Thyroid gland (tissue), 4 donors: ENCODE measurements at regions of chr5 and their contacts with region 1.

Region 1: DNA sequence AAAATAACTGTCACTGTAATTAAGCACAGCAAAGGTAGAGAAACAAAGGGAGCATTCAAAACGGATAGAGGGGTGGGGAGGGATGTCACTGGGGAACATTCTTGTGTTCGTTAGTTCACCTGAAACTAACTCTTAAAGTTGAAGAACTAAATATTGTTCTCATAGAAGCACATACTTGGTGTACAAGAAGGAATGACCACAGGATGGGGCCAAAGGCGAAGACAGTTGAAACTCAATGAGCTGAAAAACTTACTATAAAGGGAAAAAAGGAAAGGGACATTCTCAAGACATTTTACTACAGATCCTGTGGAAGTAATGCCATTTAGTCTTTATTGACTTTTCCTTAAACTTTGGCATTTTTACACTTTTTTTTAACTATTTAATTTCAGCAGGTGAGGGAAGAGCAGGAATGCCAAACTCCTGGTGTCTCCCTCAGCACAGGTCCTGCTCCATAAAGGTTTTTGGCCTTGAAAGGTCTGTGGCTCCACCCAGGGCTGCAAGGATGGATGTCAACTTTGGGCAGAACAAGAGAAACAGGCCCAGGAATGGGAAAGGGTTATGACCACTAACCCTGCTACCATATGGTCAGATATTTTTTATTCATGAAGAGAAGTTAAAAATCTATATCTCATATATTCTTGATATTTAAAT is 197.6 kb upstream of the RASA1 start:
- DNase-seq: peak; percentile 54 to 68
- H3K4me3 ChIP-seq: no peak overlapping the region
- H3K27ac ChIP-seq: no peak overlapping the region
- H3K4me1 ChIP-seq: no peaks in the 10 kb centered on the region
- H3K27me3 ChIP-seq: no peaks in the 10 kb centered on the region
- CTCF ChIP-seq: peak in 5 of 6 experiments; percentile 21 to 82 (median 61)
- POLR2A ChIP-seq: no peak

Region 2: GRCh38 chr5:86824637-86825036 is 245.5 kb before region 1 on chr5:
- intact Hi-C with region 1: no loop called
- DNase-seq: peak; percentile 56 to 57
- H3K4me3 ChIP-seq: no peak overlapping the region
- H3K27ac ChIP-seq: no peak overlapping the region
- H3K4me1 ChIP-seq: no peaks in the 10 kb centered on the region
- H3K27me3 ChIP-seq: no peaks in the 10 kb centered on the region
- CTCF ChIP-seq: no peak
- POLR2A ChIP-seq: no peak

Region 3: DNA sequence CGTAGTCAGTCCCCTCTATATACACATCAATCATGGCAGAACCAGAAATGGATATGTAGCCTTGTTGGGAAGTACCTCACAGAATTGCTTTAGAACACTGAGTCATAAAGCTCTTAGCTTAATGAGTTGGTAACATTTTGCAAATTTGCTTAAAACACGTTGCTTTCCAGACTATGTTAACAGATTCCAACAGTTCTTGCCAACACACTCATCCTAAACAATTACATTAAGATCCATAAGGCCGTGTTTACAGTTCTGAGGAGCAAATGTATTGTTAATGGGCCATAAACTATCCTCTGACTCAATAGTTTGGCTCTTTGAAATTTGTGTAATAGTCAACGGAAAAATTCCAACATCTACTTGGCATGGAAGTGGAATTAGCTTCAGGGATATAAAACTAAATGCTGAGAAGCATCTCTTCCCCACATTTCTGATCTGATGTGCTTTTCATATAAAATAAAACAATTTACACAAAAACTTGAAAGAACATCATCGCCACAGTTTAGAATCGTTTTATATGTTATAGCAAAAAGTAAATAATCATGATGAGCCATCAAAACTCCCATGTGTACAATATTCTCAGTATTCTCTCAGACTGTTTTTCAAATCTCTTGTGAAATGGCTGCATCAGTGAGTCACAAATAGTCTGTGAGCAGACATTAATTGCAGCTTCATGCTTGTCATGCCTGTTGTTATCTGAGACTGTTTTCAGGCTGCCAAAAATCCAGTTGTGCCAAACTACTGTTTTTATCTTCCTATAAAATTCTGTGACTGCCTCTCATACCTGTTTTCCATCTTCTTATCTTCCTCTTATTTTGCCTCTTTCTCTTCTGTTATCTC is 160.4 kb before region 1 on chr5:
- intact Hi-C with region 1: no loop called
- DNase-seq: no peak
- H3K4me3 ChIP-seq: no peak overlapping the region
- H3K27ac ChIP-seq: no peak overlapping the region
- H3K4me1 ChIP-seq: no peaks in the 10 kb centered on the region
- H3K27me3 ChIP-seq: no peaks in the 10 kb centered on the region
- CTCF ChIP-seq: no peak
- POLR2A ChIP-seq: no peak

Region 4: DNA sequence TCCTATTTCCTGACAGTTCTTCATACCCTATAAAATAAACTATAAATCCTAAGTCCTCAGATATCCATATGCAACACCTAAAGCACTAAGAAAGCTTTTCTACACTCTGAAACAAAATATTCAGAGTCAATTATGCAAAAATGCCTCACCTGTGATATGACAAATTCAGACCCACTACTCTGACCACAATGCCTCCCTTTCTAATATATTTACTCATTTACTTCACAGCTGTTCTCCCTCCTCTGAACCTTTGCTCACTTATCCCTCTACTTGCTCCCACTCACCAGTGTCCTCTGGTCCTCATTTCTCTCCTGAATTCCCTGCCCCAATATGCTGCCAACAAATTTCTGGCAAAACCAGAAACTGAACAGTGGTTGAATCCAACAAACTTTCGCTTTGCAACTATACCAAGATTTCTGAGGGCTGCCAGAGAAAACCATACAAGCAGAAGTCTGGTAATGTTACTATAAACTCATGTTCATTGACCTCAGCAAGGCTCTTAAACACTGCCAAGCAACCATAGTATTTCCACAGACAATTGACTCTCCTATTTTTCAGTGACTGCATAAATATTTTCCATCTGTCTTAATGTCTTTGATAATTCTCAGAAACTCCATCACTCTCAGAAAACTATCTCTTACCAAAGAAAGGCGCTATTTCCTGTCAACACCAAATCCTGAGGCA is 335.5 kb after region 1 on chr5:
- intact Hi-C with region 1: loop called (anchors 5 kb)
- DNase-seq: no peak
- H3K4me3 ChIP-seq: no peak overlapping the region
- H3K27ac ChIP-seq: no peak overlapping the region
- H3K4me1 ChIP-seq: peaks cover 0 to under 1% of the 10 kb centered on the region in 2 donors
- H3K27me3 ChIP-seq: no peaks in the 10 kb centered on the region
- CTCF ChIP-seq: no peak
- POLR2A ChIP-seq: no peak